Dendritic cell treated with granulocyte-macrophage colony-stimulating factor and Interleukin-4, amounts not matched to agents 40 ng/mL and 50 ng/mL, for 4 days (primary cell): ENCODE measurements at regions of chr2 and their contacts with region 1.

Region 1: GRCh38 chr2:187354661-187355060 is 93.4 kb downstream of the CALCRL start:
- H3K4me3 Mint-ChIP-seq: no peak overlapping the region
- H3K27ac Mint-ChIP-seq: peak overlapping the region; percentile 74
- H3K4me1 Mint-ChIP-seq: peaks cover 21% of the 10 kb centered on the region
- H3K27me3 Mint-ChIP-seq: no peaks in the 10 kb centered on the region

Region 2: DNA sequence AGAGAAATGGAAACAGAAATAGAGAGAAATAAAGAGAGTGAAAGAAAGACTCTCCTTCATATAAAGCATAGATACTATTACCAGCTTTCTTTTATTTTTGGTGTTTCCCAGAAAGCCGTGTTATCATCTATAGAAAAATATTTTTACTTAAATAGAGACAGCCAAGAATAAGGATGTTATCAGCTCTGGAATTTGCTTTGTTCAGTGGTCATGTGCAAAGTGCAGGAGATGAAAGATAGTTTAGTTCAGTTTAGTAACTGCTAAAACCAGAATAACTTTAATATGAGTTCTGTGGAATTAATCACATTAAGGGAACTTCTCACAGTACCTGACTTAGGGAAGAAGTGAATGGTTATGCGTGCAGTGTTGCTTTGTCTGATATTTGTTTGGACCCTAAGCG is 47.1 kb before region 1 on chr2:
- intact Hi-C with region 1: loop called (anchors 5 kb)
- H3K4me3 Mint-ChIP-seq: no peak overlapping the region
- H3K27ac Mint-ChIP-seq: no peak overlapping the region
- H3K4me1 Mint-ChIP-seq: no peaks in the 10 kb centered on the region
- H3K27me3 Mint-ChIP-seq: no peaks in the 10 kb centered on the region